GM10248 (cell line): ENCODE measurements at regions of chr17 and their contacts with region 1.

Region 1: GRCh38 chr17:74659898-74660297 is 36.4 kb upstream of the CD300E start:
- DNase-seq: no peak
- CTCF ChIP-seq: no peak

Region 2: GRCh38 chr17:74520016-74520434 is 139.9 kb before region 1 on chr17:
- CTCF ChIA-PET with region 1: no interaction called
- POLR2A ChIA-PET with region 1: no interaction called
- DNase-seq: peak; percentile 33
- CTCF ChIP-seq: no peak

Region 3: DNA sequence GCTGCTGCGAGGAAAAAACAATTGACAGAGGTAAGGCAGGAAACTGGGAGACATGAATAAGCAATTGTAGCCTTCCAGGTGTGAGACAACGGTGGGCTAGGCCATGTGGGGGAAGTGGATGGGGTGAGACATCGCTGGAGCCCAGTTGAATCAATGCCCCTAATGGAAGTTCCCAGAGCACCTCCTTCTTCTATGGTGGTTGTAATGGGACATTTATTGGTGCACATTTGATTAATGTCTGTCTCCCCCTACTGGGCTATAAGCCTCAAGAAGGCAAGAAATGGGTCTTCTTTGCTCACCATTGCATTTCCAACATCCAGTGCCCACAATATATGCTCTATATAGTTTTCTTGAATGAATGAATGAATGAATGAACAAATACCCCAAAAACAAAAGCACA is 13.7 kb before region 1 on chr17:
- CTCF ChIA-PET with region 1: interaction called, 34 read pairs
- POLR2A ChIA-PET with region 1: no interaction called
- DNase-seq: peak; percentile 66
- CTCF ChIP-seq: peak; percentile 79

Region 4: GRCh38 chr17:74690409-74690825 is 30.5 kb after region 1 on chr17:
- CTCF ChIA-PET with region 1: interaction called, 18 read pairs
- POLR2A ChIA-PET with region 1: no interaction called
- DNase-seq: no peak
- CTCF ChIP-seq: no peak

Region 5: DNA sequence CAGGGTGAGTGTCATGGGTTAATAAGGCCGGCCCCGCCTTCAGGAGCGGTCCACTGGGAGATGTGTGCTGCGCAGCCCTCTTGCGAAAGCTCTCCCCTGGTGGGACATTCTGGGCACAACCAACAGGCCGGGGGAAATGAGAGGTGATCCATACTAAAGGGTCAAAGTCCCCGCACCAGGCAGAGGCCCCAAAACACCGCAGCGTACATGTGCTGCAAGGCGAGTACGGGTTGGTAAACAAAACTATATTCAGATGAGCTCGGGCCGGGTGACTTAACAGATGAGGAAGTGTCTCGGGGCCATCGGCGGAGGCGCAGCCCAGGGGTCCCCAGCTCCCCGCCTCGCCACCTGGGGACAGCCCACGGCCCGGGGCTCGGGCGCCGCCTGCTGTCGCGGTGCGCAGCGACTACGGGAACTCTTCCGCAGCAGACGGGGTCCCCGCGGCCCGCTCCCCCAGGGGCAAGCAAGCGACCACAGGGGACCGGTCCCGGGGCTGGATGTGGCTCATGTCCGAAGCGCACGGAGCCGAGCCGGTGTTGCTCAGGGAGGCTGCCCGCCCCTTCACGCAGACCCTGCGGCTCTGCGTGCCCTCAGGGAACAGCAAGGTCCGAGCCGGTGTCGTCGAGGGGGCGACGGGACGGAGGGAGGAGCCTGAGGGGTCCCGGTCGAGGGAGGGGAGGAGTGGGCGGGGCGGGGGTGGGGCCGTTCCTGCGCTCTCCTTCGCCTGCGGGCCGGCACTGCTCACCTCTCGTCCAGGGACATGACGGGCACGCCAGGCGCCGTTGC is 76.8 kb after region 1 on chr17 and contains the start of gene RAB37:
- CTCF ChIA-PET with region 1: interaction called, 226 read pairs
- POLR2A ChIA-PET with region 1: interaction called, 3 read pairs
- DNase-seq: peak; percentile 75
- CTCF ChIP-seq: peak; percentile 79

Region 6: DNA sequence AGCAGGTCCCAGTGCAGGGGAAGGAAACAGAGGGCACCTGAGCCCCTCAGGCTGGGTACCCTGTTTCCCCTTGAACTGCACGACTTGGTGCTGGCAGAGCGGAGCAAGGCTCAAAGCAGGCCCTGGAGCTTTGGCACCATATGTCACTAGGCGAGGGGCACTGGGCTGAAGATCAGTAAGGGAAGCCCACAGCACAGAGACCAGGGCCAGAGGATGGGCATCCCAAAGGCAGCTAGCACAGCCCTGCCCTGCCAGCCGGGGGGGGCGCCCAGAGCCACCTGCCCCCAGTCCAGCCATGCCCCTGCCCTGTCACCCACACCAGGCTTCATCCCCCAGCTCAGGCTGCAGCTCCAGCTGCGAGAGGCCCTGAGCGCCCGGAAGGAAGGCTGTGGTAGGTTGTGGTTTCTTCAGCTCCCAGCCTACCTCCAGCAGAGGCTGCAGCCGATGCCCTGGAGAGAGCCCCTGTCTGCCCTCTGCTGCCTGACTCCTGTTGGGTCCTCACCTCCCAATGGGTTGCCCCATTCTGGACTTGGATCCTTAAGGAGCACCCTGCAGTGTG is 99.4 kb after region 1 on chr17:
- CTCF ChIA-PET with region 1: interaction called, 52 read pairs
- POLR2A ChIA-PET with region 1: no interaction called
- DNase-seq: peak; percentile 69
- CTCF ChIP-seq: peak; percentile 16

Region 7: GRCh38 chr17:74790161-74791054 is 130.5 kb after region 1 on chr17:
- CTCF ChIA-PET with region 1: interaction called, 23 read pairs
- POLR2A ChIA-PET with region 1: no interaction called
- DNase-seq: no peak
- CTCF ChIP-seq: no peak